CD4-positive, alpha-beta T cell (primary cell): ENCODE measurements at regions of chr5 and their contacts with region 1.

Region 1: GRCh38 chr5:138575194-138576015 is at the start of gene HSPA9:
- DNase-seq: peak; percentile 93 to 100 (median 96)
- ATAC-seq: peak; percentile 80
- H3K4me3 ChIP-seq: peak within 1 kb of the TSS; percentile 79
- H3K4me3 Mint-ChIP-seq: peak within 1 kb of the TSS; percentile 97
- H3K27ac ChIP-seq: peak within 1 kb of the TSS; percentile 98 to 99
- H3K27ac Mint-ChIP-seq: peak within 1 kb of the TSS; percentile 100
- H3K4me1 ChIP-seq: peaks cover 26% of the 10 kb centered on the region
- H3K4me1 Mint-ChIP-seq: peaks cover 50% of the 10 kb centered on the region
- H3K27me3 ChIP-seq: no peaks in the 10 kb centered on the region
- H3K27me3 Mint-ChIP-seq: no peaks in the 10 kb centered on the region
- CTCF ChIP-seq: no peak
- total RNA-seq, gene HSPA9: 354 to 366 TPM

Region 2: GRCh38 chr5:138213161-138214029 is 362.0 kb before region 1 on chr5 and contains the start of gene CDC23:
- CTCF ChIA-PET with region 1: interaction called, 3 read pairs
- POLR2A ChIA-PET with region 1: interaction called, 6 read pairs
- intact Hi-C with region 1: loop called in 1 of 2 experiments (anchors 10 kb)
- DNase-seq: peak; percentile 78 to 98 (median 83)
- ATAC-seq: peak; percentile 98
- H3K4me3 ChIP-seq: peak within 1 kb of the TSS; percentile 90
- H3K4me3 Mint-ChIP-seq: peak within 1 kb of the TSS; percentile 95
- H3K27ac ChIP-seq: peak within 1 kb of the TSS; percentile 70 to 71
- H3K27ac Mint-ChIP-seq: peak within 1 kb of the TSS; percentile 91
- H3K4me1 ChIP-seq: peaks cover 23% of the 10 kb centered on the region
- H3K4me1 Mint-ChIP-seq: peaks cover 26% of the 10 kb centered on the region
- H3K27me3 ChIP-seq: peaks cover 0 to 2% of the 10 kb centered on the region in 2 experiments
- H3K27me3 Mint-ChIP-seq: peaks cover 4% of the 10 kb centered on the region
- CTCF ChIP-seq: no peak
- total RNA-seq, gene CDC23: 14.2 to 15.6 TPM

Region 3: DNA sequence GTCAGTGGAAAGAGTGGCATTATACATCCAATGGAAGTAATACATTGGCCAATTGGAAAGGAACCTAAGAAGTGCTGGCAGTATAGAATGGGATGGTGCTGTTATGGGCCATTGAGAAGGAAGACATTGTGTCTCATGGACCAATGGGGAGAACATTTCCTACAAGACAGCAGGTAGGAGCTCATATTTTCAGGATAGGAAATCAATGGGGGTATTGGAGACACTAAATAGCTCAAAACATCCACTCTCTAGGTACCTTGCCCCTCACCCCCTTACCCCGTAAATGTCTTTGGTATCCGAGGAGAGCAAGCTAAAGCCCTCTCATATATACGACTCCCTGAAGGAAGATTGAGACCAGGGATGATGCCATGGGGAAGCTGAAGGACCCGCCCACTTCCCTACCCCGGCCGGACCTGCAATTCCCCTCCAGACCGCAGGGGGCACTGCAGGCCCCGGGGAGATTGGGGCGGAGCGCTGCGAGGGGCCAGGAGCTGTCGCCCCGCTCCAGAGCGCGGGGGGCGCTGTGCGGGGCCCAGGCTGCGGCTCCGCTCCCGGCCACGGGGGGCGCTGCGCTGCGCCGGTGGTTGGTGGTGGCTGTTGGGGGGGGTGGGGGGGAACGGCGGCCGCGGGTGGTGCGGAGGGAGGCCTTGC is 223.2 kb before region 1 on chr5 and contains the start of gene KDM3B:
- CTCF ChIA-PET with region 1: interaction called, 9 read pairs
- POLR2A ChIA-PET with region 1: interaction called, 17 read pairs
- intact Hi-C with region 1: loop called in 1 of 2 experiments (anchors 10 kb)
- DNase-seq: peak; percentile 82 to 97 (median 91)
- ATAC-seq: peak; percentile 83
- H3K4me3 ChIP-seq: peak within 1 kb of the TSS; percentile 99
- H3K4me3 Mint-ChIP-seq: peak within 1 kb of the TSS; percentile 95
- H3K27ac ChIP-seq: peak within 1 kb of the TSS; percentile 84 to 89
- H3K27ac Mint-ChIP-seq: peak within 1 kb of the TSS; percentile 94
- H3K4me1 ChIP-seq: peaks cover 24% of the 10 kb centered on the region
- H3K4me1 Mint-ChIP-seq: peaks cover 42% of the 10 kb centered on the region
- H3K27me3 ChIP-seq: no peaks in the 10 kb centered on the region
- H3K27me3 Mint-ChIP-seq: no peaks in the 10 kb centered on the region
- CTCF ChIP-seq: peak; percentile 90
- total RNA-seq, gene KDM3B: 59.5 to 66.0 TPM

Region 4: DNA sequence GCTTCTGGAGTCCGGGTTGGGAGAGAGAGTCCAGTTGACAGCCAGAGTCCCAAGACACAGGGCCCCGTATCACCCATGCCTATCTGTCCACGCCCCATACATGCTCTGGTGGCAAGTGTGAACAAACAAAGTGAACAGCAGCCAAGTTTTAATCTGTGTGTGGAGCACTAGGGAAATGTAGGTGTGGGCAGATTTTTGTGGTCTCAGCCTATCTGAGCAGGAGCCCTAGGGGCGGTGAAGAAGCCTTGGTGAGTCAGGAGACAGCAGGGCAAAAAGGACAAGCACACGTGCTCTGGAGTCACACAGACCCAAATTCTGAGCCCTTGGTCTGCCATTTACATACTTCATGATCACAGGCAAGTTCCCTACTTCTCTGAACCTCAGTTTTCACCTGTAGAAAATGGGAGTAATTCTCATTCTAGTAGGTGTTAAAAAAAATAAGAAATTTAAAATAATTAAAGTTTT is 86.9 kb before region 1 on chr5:
- CTCF ChIA-PET with region 1: no interaction called
- POLR2A ChIA-PET with region 1: no interaction called
- intact Hi-C with region 1: no loop called
- DNase-seq: no peak
- ATAC-seq: no peak
- H3K4me3 ChIP-seq: no peak overlapping the region
- H3K4me3 Mint-ChIP-seq: no peak overlapping the region
- H3K27ac ChIP-seq: no peak overlapping the region
- H3K27ac Mint-ChIP-seq: no peak overlapping the region
- H3K4me1 ChIP-seq: peaks cover 24% of the 10 kb centered on the region
- H3K4me1 Mint-ChIP-seq: peaks cover 15% of the 10 kb centered on the region
- H3K27me3 ChIP-seq: peaks cover 0 to 17% of the 10 kb centered on the region in 2 experiments
- H3K27me3 Mint-ChIP-seq: peaks cover 14% of the 10 kb centered on the region
- CTCF ChIP-seq: no peak

Region 5: DNA sequence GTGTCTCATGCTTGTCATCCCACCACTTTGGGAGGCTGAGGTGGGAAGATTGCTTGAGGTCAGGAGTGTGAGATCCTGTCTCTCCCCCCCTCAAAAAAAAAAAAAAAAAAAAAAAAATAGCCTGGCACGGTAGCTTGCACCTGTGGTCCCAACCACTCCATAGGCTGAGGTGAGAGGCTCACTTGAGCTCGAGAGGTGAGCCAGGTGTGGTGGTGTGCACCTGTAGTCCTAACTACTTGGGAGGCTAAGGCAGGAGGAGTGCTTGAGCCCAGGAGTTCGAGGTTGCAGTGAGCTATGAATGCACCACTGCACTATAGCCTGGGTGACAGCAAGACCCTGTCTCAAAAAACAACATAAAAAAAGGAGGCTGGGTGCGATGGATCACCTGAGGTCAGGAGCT is 22.7 kb before region 1 on chr5:
- CTCF ChIA-PET with region 1: interaction called, 11 read pairs
- POLR2A ChIA-PET with region 1: interaction called, 15 read pairs
- intact Hi-C with region 1: no loop called
- DNase-seq: no peak
- ATAC-seq: no peak
- H3K4me3 ChIP-seq: no peak overlapping the region
- H3K4me3 Mint-ChIP-seq: no peak overlapping the region
- H3K27ac ChIP-seq: peak overlapping the region in 1 of 2 donors; percentile 10
- H3K27ac Mint-ChIP-seq: no peak overlapping the region
- H3K4me1 ChIP-seq: peaks cover 8% of the 10 kb centered on the region
- H3K4me1 Mint-ChIP-seq: peaks cover 26% of the 10 kb centered on the region
- H3K27me3 ChIP-seq: no peaks in the 10 kb centered on the region
- H3K27me3 Mint-ChIP-seq: no peaks in the 10 kb centered on the region
- CTCF ChIP-seq: no peak

Region 6: DNA sequence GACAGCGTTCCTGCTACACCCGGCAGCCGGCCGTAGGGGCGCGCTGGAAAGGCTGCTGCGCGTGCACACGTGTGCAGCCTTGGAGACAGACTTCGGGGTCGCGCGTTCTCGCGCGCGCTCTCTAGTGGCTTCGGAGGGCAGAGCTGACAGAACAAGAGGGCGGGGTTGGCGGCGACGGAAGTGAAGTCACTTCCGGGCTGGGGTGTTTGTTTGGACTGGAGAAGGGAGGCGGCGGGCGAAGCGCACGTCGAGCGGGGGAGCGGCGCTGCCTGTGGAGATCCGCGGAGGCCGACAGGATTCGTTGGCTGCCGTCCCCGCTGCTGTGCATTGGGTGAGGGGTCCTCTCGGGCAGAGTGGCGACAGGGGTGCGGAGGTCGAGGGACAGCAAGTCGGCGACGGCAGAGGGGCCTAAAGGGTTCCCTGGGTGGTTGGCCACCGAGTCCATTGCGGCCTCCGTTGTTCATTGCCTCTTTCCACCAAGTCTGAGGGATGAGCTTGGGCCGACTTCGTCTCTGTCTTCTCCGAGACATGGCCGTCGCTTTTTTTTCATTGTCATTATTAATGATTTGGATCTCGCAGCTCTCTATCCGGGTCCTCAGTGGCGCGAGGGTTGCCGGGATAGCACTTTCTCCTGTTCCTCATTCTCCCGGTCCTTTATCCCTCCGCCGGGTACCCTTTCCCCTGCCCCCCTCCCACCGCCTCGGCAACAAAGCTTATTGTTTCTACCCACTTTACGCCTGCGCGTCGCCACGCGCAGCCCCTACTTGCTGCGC is 766.4 kb after region 1 on chr5 and contains the start of gene PAIP2:
- CTCF ChIA-PET with region 1: no interaction called
- POLR2A ChIA-PET with region 1: interaction called, 12 read pairs
- intact Hi-C with region 1: loop called in 1 of 2 experiments (anchors 5 kb)
- DNase-seq: peak; percentile 95 to 99 (median 97)
- ATAC-seq: peak; percentile 82
- H3K4me3 ChIP-seq: peak within 1 kb of the TSS; percentile 94
- H3K4me3 Mint-ChIP-seq: peak within 1 kb of the TSS; percentile 96
- H3K27ac ChIP-seq: peak within 1 kb of the TSS; percentile 100
- H3K27ac Mint-ChIP-seq: peak within 1 kb of the TSS; percentile 95
- H3K4me1 ChIP-seq: peaks cover 34% of the 10 kb centered on the region
- H3K4me1 Mint-ChIP-seq: peaks cover 65% of the 10 kb centered on the region
- H3K27me3 ChIP-seq: no peaks in the 10 kb centered on the region
- H3K27me3 Mint-ChIP-seq: no peaks in the 10 kb centered on the region
- CTCF ChIP-seq: peak; percentile 70
- total RNA-seq, gene PAIP2: 151 to 156 TPM

Region 7: GRCh38 chr5:140174465-140175366 is 1599.3 kb after region 1 on chr5 and contains the start of gene CYSTM1:
- CTCF ChIA-PET with region 1: no interaction called
- POLR2A ChIA-PET with region 1: no interaction called
- intact Hi-C with region 1: loop called in 1 of 2 experiments (anchors 10 kb)
- DNase-seq: peak; percentile 90 to 99 (median 94)
- ATAC-seq: peak; percentile 91
- H3K4me3 ChIP-seq: peak within 1 kb of the TSS; percentile 66
- H3K4me3 Mint-ChIP-seq: peak within 1 kb of the TSS; percentile 95
- H3K27ac ChIP-seq: peak within 1 kb of the TSS; percentile 68 to 82
- H3K27ac Mint-ChIP-seq: peak within 1 kb of the TSS; percentile 96
- H3K4me1 ChIP-seq: peaks cover 17% of the 10 kb centered on the region
- H3K4me1 Mint-ChIP-seq: peaks cover 16% of the 10 kb centered on the region
- H3K27me3 ChIP-seq: no peaks in the 10 kb centered on the region
- H3K27me3 Mint-ChIP-seq: peaks cover 5% of the 10 kb centered on the region
- CTCF ChIP-seq: no peak
- total RNA-seq, gene CYSTM1: 7.2 to 7.4 TPM